Esophagus muscularis mucosa (tissue), 4 donors: ENCODE measurements at regions of chr7 and their contacts with region 1.

Region 1: DNA sequence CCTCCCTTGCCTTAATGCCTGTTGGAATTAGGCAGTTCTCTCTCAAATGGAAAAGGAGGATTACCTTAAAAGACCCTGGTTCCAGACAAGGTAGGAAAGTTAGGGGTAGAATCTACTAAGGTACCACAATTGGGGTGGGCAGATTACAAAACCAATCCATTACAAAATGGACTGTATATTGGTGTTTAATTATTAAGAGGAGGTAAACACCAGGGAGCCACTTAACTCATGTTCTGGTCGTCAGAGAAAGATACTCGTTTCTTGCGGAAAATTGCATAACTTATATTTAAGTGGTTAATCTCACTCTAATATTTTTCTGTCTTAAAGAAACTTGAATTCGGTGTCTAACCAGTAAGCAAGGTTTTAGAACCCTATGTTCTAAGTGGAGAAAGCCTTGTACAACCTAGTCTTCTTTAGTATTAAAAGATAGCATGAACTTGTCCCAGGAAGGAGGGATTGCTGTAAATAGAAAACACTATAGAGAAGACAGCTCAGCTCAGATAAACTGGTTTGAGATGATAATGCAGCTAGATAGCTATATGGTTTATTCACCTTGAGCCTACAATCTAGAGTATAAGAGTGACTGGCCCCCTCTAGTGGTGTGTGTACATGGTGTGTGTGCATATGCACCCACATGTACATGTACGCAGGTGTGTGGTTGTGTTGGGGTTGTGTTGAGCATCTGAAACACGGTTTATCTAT is 58.0 kb upstream of the STRIP2 start:
- DNase-seq: no peak
- H3K4me3 ChIP-seq: no peak overlapping the region
- H3K27ac ChIP-seq: no peak overlapping the region
- H3K4me1 ChIP-seq: no peaks in the 10 kb centered on the region
- H3K27me3 ChIP-seq: no peaks in the 10 kb centered on the region
- CTCF ChIP-seq: peak; percentile 44 to 59 (median 45)
- EP300 ChIP-seq: no peak
- POLR2A ChIP-seq: no peak

Region 2: DNA sequence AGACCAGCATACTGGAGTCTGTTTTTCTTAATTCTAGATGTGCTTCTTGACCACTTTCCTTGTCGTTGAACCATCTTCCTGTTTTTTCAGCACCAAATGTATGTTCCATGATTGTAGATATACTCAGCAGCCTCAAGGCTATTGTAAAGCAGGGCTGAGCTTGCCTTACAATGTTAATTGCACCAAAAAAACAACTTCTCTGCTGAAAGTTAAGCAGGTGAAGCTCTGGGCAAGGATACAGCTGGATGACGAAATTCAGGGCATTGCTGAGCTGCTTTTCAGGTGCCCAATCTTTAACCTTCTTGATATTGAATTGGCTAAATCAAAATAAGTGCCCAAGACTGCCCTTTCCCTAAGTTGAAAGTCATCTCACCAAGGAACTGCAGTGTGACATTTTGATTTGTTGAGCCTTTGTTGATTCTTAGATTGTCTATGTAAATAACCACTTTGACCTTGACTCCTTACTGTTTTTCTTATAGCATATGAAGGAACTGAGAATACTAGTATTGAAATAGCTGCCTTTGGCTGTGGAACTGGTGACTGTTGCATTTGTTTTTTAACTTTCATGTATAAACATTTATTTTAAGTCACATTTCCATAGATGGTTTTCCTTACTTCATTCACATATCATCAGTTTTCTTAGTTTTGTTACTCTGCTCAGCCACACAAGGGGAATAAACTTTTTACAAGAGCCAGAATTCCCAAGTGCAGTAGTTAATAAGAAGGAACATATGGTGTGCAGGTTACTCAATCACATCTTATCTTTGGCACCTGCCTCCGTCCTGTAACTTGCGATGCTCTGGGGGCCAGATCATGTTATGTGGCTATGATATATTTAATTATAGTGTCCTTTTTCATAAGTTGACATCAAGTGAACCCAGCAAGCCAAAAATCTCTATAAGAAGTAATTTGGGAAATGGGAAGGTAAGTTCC is 148.3 kb before region 1 on chr7:
- intact Hi-C with region 1: no loop called
- DNase-seq: no peak
- H3K4me3 ChIP-seq: no peak overlapping the region
- H3K27ac ChIP-seq: no peak overlapping the region
- H3K4me1 ChIP-seq: peaks cover 5 to 44% (median 28%) of the 10 kb centered on the region in 4 donors
- H3K27me3 ChIP-seq: no peaks in the 10 kb centered on the region
- CTCF ChIP-seq: no peak
- EP300 ChIP-seq: no peak
- POLR2A ChIP-seq: no peak

Region 3: GRCh38 chr7:129343099-129343700 is 33.0 kb before region 1 on chr7:
- intact Hi-C with region 1: loop called (anchors 5 kb)
- DNase-seq: no peak
- H3K4me3 ChIP-seq: no peak overlapping the region
- H3K27ac ChIP-seq: no peak overlapping the region
- H3K4me1 ChIP-seq: peaks cover 0 to 6% (median 2%) of the 10 kb centered on the region in 4 donors
- H3K27me3 ChIP-seq: no peaks in the 10 kb centered on the region
- CTCF ChIP-seq: peak; percentile 71 to 75 (median 72)
- EP300 ChIP-seq: no peak
- POLR2A ChIP-seq: no peak

Region 4: GRCh38 chr7:129644634-129645230 is 268.5 kb after region 1 on chr7:
- intact Hi-C with region 1: loop called (anchors 10 kb)
- DNase-seq: no peak
- H3K4me3 ChIP-seq: no peak overlapping the region
- H3K27ac ChIP-seq: no peak overlapping the region
- H3K4me1 ChIP-seq: peaks cover 12 to 25% (median 21%) of the 10 kb centered on the region in 4 donors
- H3K27me3 ChIP-seq: no peaks in the 10 kb centered on the region
- CTCF ChIP-seq: peak; percentile 35 to 52 (median 39)
- EP300 ChIP-seq: no peak
- POLR2A ChIP-seq: no peak